ENCODE measurements at regions of chr17 and their contacts with region 1.

Region 1: GRCh38 chr17:64984851-64985521 is 65.7 kb upstream of the LRRC37A3 start:
- DNase-seq: peak; percentile 61
- H3K4me3 ChIP-seq: peak overlapping the region; percentile 41
- H3K27ac ChIP-seq: peak overlapping the region; percentile 95
- H3K4me1 ChIP-seq: peaks cover 89% of the 10 kb centered on the region
- CTCF ChIP-seq: no peak

Region 2: GRCh38 chr17:64781014-64781753 is 203.8 kb before region 1 on chr17:
- CTCF ChIA-PET with region 1: no interaction called
- POLR2A ChIA-PET with region 1: no interaction called
- intact Hi-C with region 1: no loop called
- DNase-seq: peak; percentile 62
- H3K4me3 ChIP-seq: peak overlapping the region; percentile 59
- H3K27ac ChIP-seq: no peak overlapping the region
- H3K4me1 ChIP-seq: peaks cover 45% of the 10 kb centered on the region
- CTCF ChIP-seq: no peak

Region 3: DNA sequence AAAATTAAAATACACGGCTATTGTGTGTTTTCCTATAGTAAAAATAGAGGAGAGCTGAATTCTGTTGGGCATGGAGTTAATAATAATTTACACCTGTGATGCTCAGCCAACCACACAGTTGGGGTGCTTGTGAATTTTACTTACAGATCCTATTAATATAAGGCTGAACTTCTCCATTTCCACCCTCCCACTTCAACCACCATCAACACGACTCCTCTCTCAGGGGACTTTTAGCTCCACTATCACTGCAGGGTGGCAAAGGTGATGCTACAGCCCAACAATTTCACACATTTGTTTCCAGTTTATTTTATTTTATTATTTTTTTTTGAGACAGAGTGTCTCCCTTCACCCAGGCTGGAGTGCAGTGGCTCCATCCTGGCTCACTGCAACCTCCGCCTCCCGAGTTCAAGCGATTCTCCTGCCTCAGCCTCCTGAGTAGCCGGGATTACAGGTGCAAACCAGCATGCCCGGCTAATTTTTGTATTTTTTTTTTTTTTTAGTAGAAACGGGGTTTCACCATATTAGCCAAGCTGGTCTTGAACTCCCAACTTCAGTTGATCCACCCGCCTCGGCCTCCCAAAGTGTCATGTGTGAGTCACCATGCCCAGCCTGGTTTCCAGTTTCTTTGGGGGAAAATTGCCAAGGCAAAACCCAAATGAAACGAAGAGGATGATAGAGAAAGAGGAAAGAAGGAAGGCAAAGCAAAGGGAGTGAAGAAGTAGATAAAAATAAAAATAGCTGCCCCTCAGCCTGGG is 13.6 kb after region 1 on chr17:
- CTCF ChIA-PET with region 1: interaction called, 3 read pairs
- POLR2A ChIA-PET with region 1: interaction called, 16 read pairs
- intact Hi-C with region 1: no loop called
- DNase-seq: peak; percentile 39
- H3K4me3 ChIP-seq: peak overlapping the region; percentile 1
- H3K27ac ChIP-seq: peak overlapping the region; percentile 59
- H3K4me1 ChIP-seq: peaks cover 90% of the 10 kb centered on the region
- CTCF ChIP-seq: no peak

Region 4: DNA sequence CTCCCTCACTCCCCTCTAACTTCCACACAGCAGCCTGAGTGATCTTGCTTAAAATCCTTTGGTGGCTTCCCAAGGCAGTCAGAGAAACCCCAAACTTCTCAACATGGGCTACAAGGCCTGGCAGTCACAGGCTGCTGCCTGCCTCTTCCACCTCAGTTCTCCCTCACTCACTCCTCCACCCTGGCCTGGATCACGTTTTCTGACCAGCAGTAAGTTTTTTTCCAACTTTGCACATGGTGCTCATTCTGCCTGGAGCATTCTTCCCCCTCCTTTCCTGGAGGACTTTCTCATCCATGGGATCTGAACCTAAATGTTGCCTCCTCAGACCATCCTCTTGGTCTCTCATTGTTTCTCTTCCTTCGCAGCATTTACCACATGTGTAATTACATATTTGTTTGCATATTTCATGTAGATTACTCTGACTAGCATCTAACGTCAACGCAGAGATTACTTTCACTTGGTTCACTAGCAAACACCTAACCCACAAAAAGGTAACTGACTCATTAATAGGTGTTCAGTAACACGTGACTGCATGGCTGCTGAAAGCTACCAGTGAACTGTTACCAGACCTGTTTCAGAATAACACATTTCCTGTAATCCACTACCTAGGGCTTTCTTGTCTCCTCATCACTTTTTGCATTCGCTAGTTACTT is 54.5 kb after region 1 on chr17:
- CTCF ChIA-PET with region 1: no interaction called
- POLR2A ChIA-PET with region 1: interaction called, 16 read pairs
- intact Hi-C with region 1: loop called (anchors 2 kb)
- DNase-seq: peak; percentile 72
- H3K4me3 ChIP-seq: peak overlapping the region; percentile 57
- H3K27ac ChIP-seq: peak overlapping the region; percentile 89
- H3K4me1 ChIP-seq: peaks cover 100% of the 10 kb centered on the region
- CTCF ChIP-seq: no peak

Region 5: DNA sequence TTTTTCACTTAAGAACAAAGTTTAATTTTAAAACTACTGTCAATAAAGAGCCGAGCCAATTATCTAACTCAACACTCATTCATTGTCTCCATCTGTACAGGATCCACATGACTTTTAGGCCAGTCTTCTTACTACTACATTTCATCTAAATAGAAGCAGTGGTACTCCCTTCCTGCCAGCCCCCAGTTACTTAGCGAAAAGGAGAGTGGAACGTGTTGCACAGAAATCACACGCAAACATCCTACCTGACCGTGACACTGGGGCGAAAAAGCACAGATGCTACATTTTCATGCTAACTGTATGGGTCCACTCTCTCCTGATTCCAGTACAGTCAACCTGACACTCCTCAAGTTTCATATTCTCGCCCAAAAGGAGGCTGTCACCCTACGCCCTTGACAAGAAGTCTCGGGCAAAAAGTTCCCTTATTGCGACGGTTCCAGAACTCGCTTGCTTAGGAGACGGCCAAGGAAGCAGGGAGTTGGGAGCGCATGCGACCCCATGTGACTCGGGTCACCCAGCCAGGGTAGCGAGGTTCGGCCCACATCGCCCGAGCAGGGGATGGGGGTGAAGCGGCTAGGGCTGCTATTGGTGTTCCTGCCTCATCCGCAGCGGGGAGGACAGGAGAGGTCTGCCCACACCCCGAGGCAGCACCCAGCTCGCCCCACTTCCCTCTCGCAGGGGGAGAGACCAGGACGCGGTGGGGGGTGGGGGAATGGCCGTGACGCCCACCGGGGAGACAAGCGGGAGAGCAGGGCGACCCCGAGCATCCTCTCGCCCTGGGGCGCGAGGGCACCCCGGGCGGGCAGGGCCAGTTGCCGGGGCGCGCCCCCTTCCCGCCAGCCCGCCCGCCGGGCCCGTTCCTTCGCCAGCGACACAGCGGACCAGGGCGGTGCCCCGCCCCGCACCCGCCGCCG is 70.6 kb after region 1 on chr17:
- CTCF ChIA-PET with region 1: interaction called, 3 read pairs
- POLR2A ChIA-PET with region 1: interaction called, 7 read pairs
- intact Hi-C with region 1: loop called (anchors 1 kb)
- DNase-seq: peak; percentile 59
- H3K4me3 ChIP-seq: peak overlapping the region; percentile 76
- H3K27ac ChIP-seq: peak overlapping the region; percentile 84
- H3K4me1 ChIP-seq: peaks cover 60% of the 10 kb centered on the region
- CTCF ChIP-seq: no peak

Region 6: GRCh38 chr17:65181237-65182061 is 196.5 kb after region 1 on chr17:
- CTCF ChIA-PET with region 1: interaction called, 3 read pairs
- POLR2A ChIA-PET with region 1: interaction called, 3 read pairs
- intact Hi-C with region 1: loop called (anchors 5 kb)
- DNase-seq: peak; percentile 74
- H3K4me3 ChIP-seq: peak overlapping the region; percentile 42
- H3K27ac ChIP-seq: peak overlapping the region; percentile 96
- H3K4me1 ChIP-seq: peaks cover 88% of the 10 kb centered on the region
- CTCF ChIP-seq: no peak